Astrocyte of the cerebellum (primary cell): ENCODE measurements at regions of chr15 and their contacts with region 1.

Region 1: DNA sequence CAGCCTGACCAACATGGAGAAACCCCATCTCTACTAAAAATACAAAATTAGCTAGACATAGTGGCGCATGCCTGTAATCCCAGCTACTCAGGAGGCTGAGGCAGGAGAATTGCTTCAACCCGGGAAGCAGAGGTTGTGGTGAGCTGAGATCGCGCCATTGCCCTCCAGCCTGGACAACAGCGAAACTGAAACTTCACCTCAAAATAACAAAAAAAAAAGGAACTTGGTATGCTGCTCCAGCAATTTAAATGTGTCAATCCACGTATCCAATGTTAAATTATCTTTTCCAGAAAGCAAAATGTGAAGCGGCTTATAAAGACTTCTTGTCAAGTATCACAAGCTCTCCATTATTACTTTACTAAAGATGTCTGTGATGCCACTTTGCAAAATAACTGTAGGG is 9.9 kb upstream of the ARIH1 start:
- DNase-seq: no peak
- H3K4me3 ChIP-seq: no peak overlapping the region
- CTCF ChIP-seq: no peak

Region 2: DNA sequence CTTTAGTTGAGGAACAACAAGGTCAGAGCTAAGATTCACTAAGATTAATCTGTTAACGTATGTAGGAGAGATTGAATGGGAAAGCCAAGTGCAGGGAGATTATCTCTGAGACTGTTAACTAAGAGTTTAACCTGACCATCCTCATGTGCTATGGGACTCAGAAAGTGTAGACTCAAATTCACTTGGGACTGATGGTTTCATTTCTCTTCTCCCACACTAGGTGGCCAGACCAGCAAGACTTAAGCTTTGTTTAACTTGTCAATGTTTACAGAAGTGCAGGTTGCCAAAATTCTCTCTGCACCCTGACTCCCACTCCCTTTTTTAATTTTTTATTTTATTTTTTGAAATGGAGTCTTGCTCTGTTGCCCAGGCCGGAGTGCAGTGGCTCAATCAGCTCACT is 82.1 kb before region 1 on chr15:
- in situ Hi-C with region 1: loop called (anchors 5 kb)
- DNase-seq: no peak
- H3K4me3 ChIP-seq: no peak overlapping the region
- CTCF ChIP-seq: peak; percentile 32

Region 3: GRCh38 chr15:72532991-72533601 is 68.8 kb after region 1 on chr15:
- in situ Hi-C with region 1: no loop called
- DNase-seq: no peak
- H3K4me3 ChIP-seq: no peak overlapping the region
- CTCF ChIP-seq: peak; percentile 38